ENCODE measurements at regions of chrX and their contacts with region 1.

Region 1: GRCh38 chrX:24870143-24870542 is 145.6 kb downstream of the ARX start:
- DNase-seq: no peak
- ATAC-seq: no peak
- H3K4me3 ChIP-seq: no peak overlapping the region
- H3K27ac ChIP-seq: no peak overlapping the region
- H3K4me1 ChIP-seq: no peaks in the 10 kb centered on the region
- H3K27me3 ChIP-seq: no peaks in the 10 kb centered on the region
- CTCF ChIP-seq: no peak
- EP300 ChIP-seq: no peak
- POLR2A ChIP-seq: no peak
- RAD21 ChIP-seq: no peak

Region 2: GRCh38 chrX:24805201-24805600 is 64.9 kb before region 1 on chrX:
- CTCF ChIA-PET with region 1: no interaction called
- POLR2A ChIA-PET with region 1: no interaction called
- in situ Hi-C with region 1: no loop called
- intact Hi-C with region 1: loop called (anchors 10 kb)
- DNase-seq: no peak
- ATAC-seq: no peak
- H3K4me3 ChIP-seq: no peak overlapping the region
- H3K27ac ChIP-seq: no peak overlapping the region
- H3K4me1 ChIP-seq: no peaks in the 10 kb centered on the region
- H3K27me3 ChIP-seq: no peaks in the 10 kb centered on the region
- CTCF ChIP-seq: no peak
- EP300 ChIP-seq: no peak
- POLR2A ChIP-seq: no peak
- RAD21 ChIP-seq: no peak

Region 3: DNA sequence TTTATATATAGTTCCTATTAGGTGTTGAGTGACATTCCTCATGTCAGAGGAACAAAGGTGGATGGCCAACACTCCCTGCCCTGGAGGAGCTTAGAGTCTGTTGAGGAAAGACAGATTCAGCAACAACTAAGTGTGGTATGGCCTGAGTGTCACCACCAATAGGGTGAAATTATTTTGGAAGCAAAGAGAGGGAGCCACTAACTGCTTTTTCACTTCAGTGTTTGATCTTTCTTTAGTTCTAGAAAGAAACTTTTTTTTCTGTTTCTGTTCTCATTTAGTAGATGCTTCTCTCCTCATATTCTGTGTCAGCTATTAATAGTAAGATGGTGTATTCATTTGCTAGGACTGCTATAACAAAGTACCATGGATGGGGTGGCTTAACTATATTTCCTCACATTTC is 64.1 kb after region 1 on chrX:
- CTCF ChIA-PET with region 1: no interaction called
- POLR2A ChIA-PET with region 1: no interaction called
- in situ Hi-C with region 1: no loop called
- intact Hi-C with region 1: no loop called
- DNase-seq: no peak
- ATAC-seq: no peak
- H3K4me3 ChIP-seq: no peak overlapping the region
- H3K27ac ChIP-seq: no peak overlapping the region
- H3K4me1 ChIP-seq: no peaks in the 10 kb centered on the region
- H3K27me3 ChIP-seq: no peaks in the 10 kb centered on the region
- CTCF ChIP-seq: no peak
- EP300 ChIP-seq: no peak
- POLR2A ChIP-seq: no peak
- RAD21 ChIP-seq: no peak